Calu3 (cell line): ENCODE measurements at regions of chr13 and their contacts with region 1.

Region 1: GRCh38 chr13:38045307-38046048 is 175.9 kb upstream of the TRPC4 start:
- DNase-seq: peak; percentile 23
- H3K4me3 Mint-ChIP-seq: no peak overlapping the region
- H3K27ac Mint-ChIP-seq: no peak overlapping the region
- H3K4me1 Mint-ChIP-seq: no peaks in the 10 kb centered on the region
- H3K27me3 Mint-ChIP-seq: no peaks in the 10 kb centered on the region
- CTCF ChIP-seq: peak; percentile 33

Region 2: GRCh38 chr13:37640499-37640898 is 405.0 kb before region 1 on chr13:
- CTCF ChIA-PET with region 1: no interaction called
- intact Hi-C with region 1: loop called (anchors 5 kb)
- DNase-seq: peak; percentile 28
- H3K4me3 Mint-ChIP-seq: no peak overlapping the region
- H3K27ac Mint-ChIP-seq: no peak overlapping the region
- H3K4me1 Mint-ChIP-seq: no peaks in the 10 kb centered on the region
- H3K27me3 Mint-ChIP-seq: no peaks in the 10 kb centered on the region
- CTCF ChIP-seq: no peak

Region 3: GRCh38 chr13:37769078-37769477 is 276.4 kb before region 1 on chr13:
- CTCF ChIA-PET with region 1: no interaction called
- intact Hi-C with region 1: loop called (anchors 5 kb)
- DNase-seq: no peak
- H3K4me3 Mint-ChIP-seq: no peak overlapping the region
- H3K27ac Mint-ChIP-seq: no peak overlapping the region
- H3K4me1 Mint-ChIP-seq: no peaks in the 10 kb centered on the region
- H3K27me3 Mint-ChIP-seq: no peaks in the 10 kb centered on the region
- CTCF ChIP-seq: no peak

Region 4: GRCh38 chr13:37869756-37870488 is 175.6 kb before region 1 on chr13 and contains the start of gene TRPC4:
- CTCF ChIA-PET with region 1: interaction called, 3 read pairs
- intact Hi-C with region 1: loop called (anchors 5 kb)
- DNase-seq: peak; percentile 37
- H3K4me3 Mint-ChIP-seq: peak within 1 kb of the TSS; percentile 66
- H3K27ac Mint-ChIP-seq: no peak within 1 kb of the TSS
- H3K4me1 Mint-ChIP-seq: no peaks in the 10 kb centered on the region
- H3K27me3 Mint-ChIP-seq: no peaks in the 10 kb centered on the region
- CTCF ChIP-seq: no peak
- total RNA-seq, gene TRPC4: 0.20 TPM in 1 of 2 replicates, not detected in the other